ENCODE measurements at regions of chr1 and their contacts with region 1.

Region 1: DNA sequence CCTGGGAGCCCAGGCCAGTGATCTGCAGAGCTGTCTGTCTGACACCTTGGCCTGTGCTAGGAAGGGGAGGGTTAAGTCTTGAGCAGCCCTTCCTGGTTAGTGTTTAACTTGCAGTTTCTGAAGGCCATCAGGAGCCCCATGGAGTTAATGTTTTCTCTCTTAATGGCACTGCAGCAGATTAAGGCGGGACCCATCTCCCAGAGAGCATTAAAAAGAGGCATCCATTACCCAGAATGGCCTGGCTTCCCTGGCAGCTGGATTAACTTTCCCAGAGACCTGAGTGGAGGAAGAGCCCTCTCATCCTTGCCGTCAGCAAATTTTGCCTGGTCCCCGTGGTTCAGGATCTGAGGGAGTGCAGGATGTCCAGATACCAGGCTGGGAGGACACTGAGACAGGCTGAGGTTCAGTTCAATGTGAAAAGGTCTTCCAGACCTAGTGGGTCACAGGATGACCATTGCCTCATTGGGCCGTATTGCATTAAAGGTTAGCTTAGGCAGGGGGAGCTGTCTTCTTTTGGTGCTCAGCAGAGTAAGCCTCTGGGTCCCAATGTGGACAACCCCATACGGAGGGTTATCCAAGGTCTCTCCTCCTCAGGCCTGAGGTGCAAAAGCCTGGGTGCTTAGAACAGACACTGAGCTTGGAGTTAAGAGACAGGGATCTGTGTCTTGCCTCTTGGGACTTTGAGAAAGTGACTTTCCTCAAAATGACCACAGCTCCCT is 522.6 kb downstream of the PTPRU start:
- DNase-seq: no peak
- ATAC-seq: no peak
- H3K4me3 ChIP-seq: no peak overlapping the region
- H3K27ac ChIP-seq: no peak overlapping the region
- H3K4me1 ChIP-seq: no peaks in the 10 kb centered on the region
- H3K27me3 ChIP-seq: peaks cover 13% of the 10 kb centered on the region
- CTCF ChIP-seq: no peak
- POLR2A ChIP-seq: no peak
- RAD21 ChIP-seq: no peak

Region 2: GRCh38 chr1:29271724-29272123 is 487.2 kb before region 1 on chr1:
- CTCF ChIA-PET with region 1: no interaction called
- POLR2A ChIA-PET with region 1: no interaction called
- RAD21 ChIA-PET with region 1: no interaction called
- intact Hi-C with region 1: no loop called
- DNase-seq: no peak
- ATAC-seq: peak; percentile 98
- H3K4me3 ChIP-seq: no peak overlapping the region
- H3K27ac ChIP-seq: no peak overlapping the region
- H3K4me1 ChIP-seq: peaks cover 16 to 19% of the 10 kb centered on the region in 2 experiments
- H3K27me3 ChIP-seq: no peaks in the 10 kb centered on the region
- CTCF ChIP-seq: no peak
- POLR2A ChIP-seq: no peak
- RAD21 ChIP-seq: no peak

Region 3: DNA sequence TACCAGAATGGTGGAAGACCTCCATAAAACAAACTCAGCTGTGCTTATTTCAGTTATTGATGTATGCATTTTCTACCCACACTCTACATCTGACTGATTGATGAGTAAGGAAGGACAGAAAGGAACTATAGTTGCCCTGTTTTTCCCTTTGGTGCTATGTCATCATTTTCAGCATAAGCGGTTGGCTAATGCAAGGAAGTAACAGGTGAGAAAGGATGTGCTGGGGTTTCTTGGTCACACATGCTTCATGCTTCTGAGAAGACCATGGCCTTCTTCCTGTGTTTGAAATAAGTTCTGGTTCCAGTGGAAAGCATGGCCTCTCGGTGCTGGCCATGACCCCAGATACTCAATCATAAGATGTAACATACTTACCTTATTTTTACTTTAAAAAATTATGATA is 18.6 kb after region 1 on chr1:
- CTCF ChIA-PET with region 1: no interaction called
- POLR2A ChIA-PET with region 1: no interaction called
- RAD21 ChIA-PET with region 1: no interaction called
- intact Hi-C with region 1: loop called (anchors 1 kb)
- DNase-seq: no peak
- ATAC-seq: no peak
- H3K4me3 ChIP-seq: no peak overlapping the region
- H3K27ac ChIP-seq: no peak overlapping the region
- H3K4me1 ChIP-seq: no peaks in the 10 kb centered on the region
- H3K27me3 ChIP-seq: peaks cover 37% of the 10 kb centered on the region
- CTCF ChIP-seq: no peak
- POLR2A ChIP-seq: no peak
- RAD21 ChIP-seq: no peak